ENCODE measurements at regions of chr5 and their contacts with region 1.

Region 1: GRCh38 chr5:96807075-96807654 is 580 bp downstream of the ERAP1 start:
- DNase-seq: peak; percentile 82 to 88
- ATAC-seq: peak; percentile 67 to 90 (median 73)
- H3K4me3 ChIP-seq: peak overlapping the region; percentile 73 to 93 (median 86)
- H3K27ac ChIP-seq: peak overlapping the region; percentile 95 to 100 (median 100)
- H3K4me1 ChIP-seq: peaks cover 0 to 55% (median 20%) of the 10 kb centered on the region in 9 donors
- H3K27me3 ChIP-seq: no peaks in the 10 kb centered on the region
- CTCF ChIP-seq: peak in 1 of 9 donors; percentile 7

Region 2: DNA sequence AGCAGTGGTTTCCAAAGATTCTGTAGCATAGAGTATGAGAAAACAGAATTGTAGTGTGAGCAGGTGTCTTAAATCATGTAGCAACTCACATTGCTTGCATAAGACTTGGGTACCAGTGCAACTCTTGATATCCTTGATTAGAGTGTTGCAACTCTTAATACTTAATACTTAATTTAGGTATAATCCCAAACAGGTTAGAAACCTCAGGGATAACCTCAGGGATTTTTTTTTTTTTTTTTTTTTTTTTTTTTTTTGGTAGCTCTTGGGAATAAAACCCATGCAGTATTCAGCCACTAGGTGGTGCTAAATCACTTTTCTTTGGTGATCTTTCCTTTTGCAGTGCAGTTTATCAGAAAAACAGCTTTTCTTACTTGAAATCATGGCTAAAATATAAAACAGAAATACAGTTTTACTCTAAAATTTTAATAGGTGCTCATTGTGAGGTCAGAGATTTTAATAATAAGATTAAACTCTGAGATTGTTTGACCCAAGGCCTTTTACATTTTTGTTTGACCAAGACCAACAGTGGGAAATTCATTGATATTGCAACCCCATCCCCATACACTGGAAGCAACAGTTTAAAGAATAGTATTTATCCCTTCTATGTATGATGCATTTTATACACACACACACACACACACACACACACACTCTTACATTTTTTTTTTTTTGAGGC is 54.7 kb before region 1 on chr5:
- intact Hi-C with region 1: loop called in 1 of 10 experiments (anchors 10 kb)
- DNase-seq: peak in 1 of 2 donors; percentile 61
- ATAC-seq: no peak
- H3K4me3 ChIP-seq: no peak overlapping the region
- H3K27ac ChIP-seq: peak overlapping the region in 6 of 10 donors; percentile 30 to 70 (median 48)
- H3K4me1 ChIP-seq: peaks cover 0 to 39% (median 9%) of the 10 kb centered on the region in 9 donors
- H3K27me3 ChIP-seq: no peaks in the 10 kb centered on the region
- CTCF ChIP-seq: peak; percentile 59 to 86 (median 73)

Region 3: GRCh38 chr5:96876292-96876850 is 69.2 kb after region 1 on chr5 and contains the start of gene ERAP2:
- intact Hi-C with region 1: loop called in 2 of 10 experiments (anchors 2 to 5 kb)
- DNase-seq: no peak
- ATAC-seq: peak in 7 of 8 donors; percentile 67 to 88 (median 81)
- H3K4me3 ChIP-seq: peak within 1 kb of the TSS; percentile 34 to 78 (median 67)
- H3K27ac ChIP-seq: peak within 1 kb of the TSS in 9 of 10 donors; percentile 57 to 90 (median 79)
- H3K4me1 ChIP-seq: peaks cover 0 to 49% (median 10%) of the 10 kb centered on the region in 9 donors
- H3K27me3 ChIP-seq: no peaks in the 10 kb centered on the region
- CTCF ChIP-seq: no peak
- total RNA-seq, gene ERAP2: 0.92 to 29.7 (median 5.9) TPM